ENCODE measurements at regions of chr7 and their contacts with region 1.

Region 1: DNA sequence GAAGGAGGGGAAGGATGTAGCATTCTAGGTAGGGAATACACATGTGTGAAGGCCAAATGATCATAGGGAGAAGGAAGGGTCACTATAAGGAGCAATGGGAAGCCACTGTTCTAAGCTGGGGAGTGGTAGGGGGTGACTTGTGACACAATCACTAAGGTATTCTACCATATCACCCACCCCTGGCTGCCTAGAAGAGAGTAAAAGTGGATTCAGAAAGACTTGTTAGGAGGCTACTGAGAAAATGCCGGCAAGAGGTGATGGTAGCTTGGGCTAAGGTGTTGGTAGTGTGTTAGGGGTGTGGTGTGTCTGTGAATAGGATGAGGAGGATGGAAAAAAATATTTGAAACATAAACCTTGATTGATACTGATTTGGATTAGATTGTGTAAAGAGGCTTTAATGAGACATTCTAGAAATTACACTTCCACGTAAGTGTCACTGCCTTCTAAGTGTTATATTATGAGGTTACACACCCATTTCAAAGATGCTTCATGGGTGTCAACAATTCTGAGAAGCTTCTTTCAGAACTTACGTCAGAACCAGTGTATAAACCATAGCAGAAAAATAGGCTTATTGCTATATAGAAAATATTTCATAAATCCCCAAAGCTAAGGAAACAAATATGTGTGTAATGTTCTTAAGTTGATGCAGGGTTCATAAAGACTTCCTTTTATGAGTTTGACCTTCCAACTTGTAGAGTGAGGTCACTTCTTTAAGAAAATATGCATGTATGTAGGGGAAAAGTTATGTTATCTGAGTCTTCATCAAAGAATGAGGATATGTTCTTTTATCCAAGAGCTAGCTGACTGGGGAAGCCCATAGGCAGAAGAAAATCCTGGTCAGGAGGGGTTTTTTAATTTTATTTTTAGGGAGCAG is 5.6 kb upstream of the BPGM start:
- DNase-seq: no peak

Region 2: DNA sequence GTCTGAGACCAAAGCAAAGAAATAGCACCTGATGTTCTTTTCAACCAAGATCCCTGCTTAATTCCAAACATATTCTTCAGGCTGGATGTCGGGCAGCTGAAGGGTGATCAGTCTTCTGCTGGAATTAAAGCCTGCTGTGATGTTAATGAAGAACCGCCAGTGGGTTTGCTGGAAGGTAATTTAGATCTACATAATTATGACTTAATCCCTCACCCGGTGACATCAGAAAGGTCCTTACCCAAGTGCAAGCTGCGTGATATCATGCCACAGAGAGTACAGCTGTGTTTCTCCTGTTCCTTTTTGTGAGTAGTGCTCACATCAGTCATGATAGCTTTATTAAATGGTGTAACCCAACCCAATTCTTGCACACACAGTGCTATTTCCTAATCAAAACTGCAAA is 543.0 kb before region 1 on chr7:
- intact Hi-C with region 1: no loop called
- DNase-seq: no peak

Region 3: GRCh38 chr7:134678115-134678514 is 37.0 kb after region 1 on chr7:
- intact Hi-C with region 1: loop called (anchors 2 kb)
- DNase-seq: no peak

Measured in cardiac septum (tissue), 1 donor.